CD14-positive monocyte (primary cell): ENCODE measurements at regions of chr15 and their contacts with region 1.

Region 1: DNA sequence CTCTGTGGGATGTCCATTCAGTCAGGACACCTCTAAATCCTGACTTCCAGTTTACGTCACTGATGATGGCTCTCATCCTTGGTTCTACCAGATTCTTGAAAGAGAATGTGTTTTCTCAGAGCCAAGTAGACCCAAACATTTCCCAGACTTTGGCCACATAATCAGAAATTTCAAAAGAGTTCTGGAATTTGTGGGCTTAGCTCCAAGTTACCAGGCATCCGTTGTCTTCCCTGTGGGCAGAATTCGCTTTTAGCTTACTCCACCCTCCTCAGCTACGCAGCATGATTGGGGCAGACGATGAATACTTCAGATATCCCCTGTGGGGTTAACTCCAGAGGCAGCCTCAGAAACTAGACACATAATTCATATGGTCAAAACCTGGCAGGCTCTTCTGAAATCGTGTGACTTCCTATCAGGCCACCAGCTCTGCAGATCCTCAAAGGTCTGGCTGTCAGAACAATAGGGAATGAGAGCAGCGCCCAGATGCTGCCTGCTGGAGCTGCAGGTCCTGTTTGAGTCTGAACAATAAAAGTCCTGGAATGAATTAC is 30.6 kb downstream of the CRTC3 start:
- DNase-seq: no peak
- H3K4me3 ChIP-seq: no peak overlapping the region
- H3K4me3 Mint-ChIP-seq: no peak overlapping the region
- H3K27ac ChIP-seq: no peak overlapping the region
- H3K27ac Mint-ChIP-seq: no peak overlapping the region
- H3K4me1 ChIP-seq: peaks cover 60 to 64% of the 10 kb centered on the region in 2 donors
- H3K4me1 Mint-ChIP-seq: peaks cover 67% of the 10 kb centered on the region
- H3K27me3 ChIP-seq: no peaks in the 10 kb centered on the region
- H3K27me3 Mint-ChIP-seq: peaks cover 0 to 3% (median 0%) of the 10 kb centered on the region in 3 donors
- CTCF ChIP-seq: no peak

Region 2: DNA sequence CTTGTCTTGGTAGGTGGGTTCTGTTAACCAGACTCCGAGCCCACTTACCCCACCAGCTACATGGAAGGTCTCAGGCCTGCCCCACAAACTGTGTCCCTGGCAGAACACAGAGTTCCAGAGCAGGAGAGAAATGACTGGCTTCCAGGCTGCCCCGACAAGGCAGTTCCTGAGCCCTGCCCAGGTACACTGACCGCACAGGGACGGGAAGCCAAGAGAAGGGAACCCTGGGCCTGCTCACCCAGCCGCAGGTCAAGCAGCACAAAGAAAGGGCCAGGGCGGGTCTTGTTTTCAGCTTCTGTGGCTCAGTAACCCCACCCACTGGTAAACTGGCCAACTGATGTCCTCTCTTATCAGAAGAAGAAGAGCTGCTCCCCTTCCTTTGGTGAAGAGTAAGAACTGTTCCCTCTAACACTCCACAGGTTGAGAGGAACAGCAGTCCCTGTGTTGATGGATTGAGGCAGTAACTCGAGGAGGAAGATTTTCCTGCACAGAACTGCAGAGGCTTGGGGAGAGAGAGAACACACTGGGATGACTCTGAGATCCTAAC is 37.8 kb after region 1 on chr15:
- intact Hi-C with region 1: loop called in 1 of 2 experiments (anchors 5 kb)
- DNase-seq: peak; percentile 36 to 45 (median 39)
- H3K4me3 ChIP-seq: no peak overlapping the region
- H3K4me3 Mint-ChIP-seq: no peak overlapping the region
- H3K27ac ChIP-seq: peak overlapping the region; percentile 59 to 77
- H3K27ac Mint-ChIP-seq: peak overlapping the region; percentile 66 to 90 (median 87)
- H3K4me1 ChIP-seq: peaks cover 44 to 55% of the 10 kb centered on the region in 2 donors
- H3K4me1 Mint-ChIP-seq: peaks cover 54% of the 10 kb centered on the region
- H3K27me3 ChIP-seq: no peaks in the 10 kb centered on the region
- H3K27me3 Mint-ChIP-seq: peaks cover 0 to 1% (median 0%) of the 10 kb centered on the region in 3 donors
- CTCF ChIP-seq: peak; percentile 42